ENCODE measurements at regions of chr15 and their contacts with region 1.

Region 1: GRCh38 chr15:80660122-80660521 is 35.0 kb upstream of the ABHD17C start:
- DNase-seq: peak; percentile 55 to 63
- ATAC-seq: peak; percentile 98 to 100
- H3K4me3 ChIP-seq: no peak overlapping the region
- H3K27ac ChIP-seq: no peak overlapping the region
- H3K4me1 ChIP-seq: no peaks in the 10 kb centered on the region
- CTCF ChIP-seq: peak; percentile 53
- EP300 ChIP-seq: no peak
- POLR2A ChIP-seq: no peak
- RAD21 ChIP-seq: peak; percentile 60 to 73

Region 2: DNA sequence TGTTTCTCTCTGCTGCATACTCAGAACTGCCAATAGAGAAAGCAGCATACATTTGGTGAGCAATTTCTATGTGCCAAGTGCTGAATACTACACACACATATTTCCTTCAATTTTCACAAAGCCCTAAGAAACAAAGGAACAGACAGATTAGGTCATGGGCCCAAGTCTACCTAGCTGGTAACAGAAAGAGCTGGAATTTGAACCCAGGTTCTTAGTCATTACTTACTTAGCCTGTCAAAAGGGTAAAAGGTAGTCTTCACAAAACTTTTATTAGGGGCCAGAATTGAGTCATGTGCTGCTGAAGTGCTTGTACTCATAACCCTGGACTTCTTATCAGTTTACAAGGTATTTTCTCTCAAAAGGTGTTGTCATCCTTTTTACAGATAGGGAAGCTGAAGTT is 24.6 kb after region 1 on chr15:
- CTCF ChIA-PET with region 1: interaction called, 14 read pairs
- POLR2A ChIA-PET with region 1: no interaction called
- DNase-seq: peak in 1 of 2 experiments; percentile 18
- ATAC-seq: no peak; a peak in 1 of 6 replicates
- H3K4me3 ChIP-seq: no peak overlapping the region
- H3K27ac ChIP-seq: no peak overlapping the region
- H3K4me1 ChIP-seq: no peaks in the 10 kb centered on the region
- CTCF ChIP-seq: no peak
- EP300 ChIP-seq: no peak
- POLR2A ChIP-seq: no peak
- RAD21 ChIP-seq: no peak